Activated CD4-positive, alpha-beta T cell treated with anti-CD3 and anti-CD28 coated beads for 36 hours (primary cell): ENCODE measurements at regions of chr10 and their contacts with region 1.

Region 1: GRCh38 chr10:97037365-97038361 is 148.1 kb downstream of the SLIT1 start:
- DNase-seq: peak; percentile 87
- ATAC-seq: peak; percentile 96
- H3K4me3 Mint-ChIP-seq: peak overlapping the region; percentile 45
- H3K27ac Mint-ChIP-seq: no peak overlapping the region
- H3K4me1 Mint-ChIP-seq: peaks cover 12% of the 10 kb centered on the region
- H3K27me3 Mint-ChIP-seq: no peaks in the 10 kb centered on the region

Region 2: GRCh38 chr10:96700374-96701099 is 337.1 kb before region 1 on chr10:
- CTCF ChIA-PET with region 1: no interaction called
- POLR2A ChIA-PET with region 1: no interaction called
- intact Hi-C with region 1: no loop called
- DNase-seq: no peak
- ATAC-seq: no peak
- H3K4me3 Mint-ChIP-seq: no peak overlapping the region
- H3K27ac Mint-ChIP-seq: no peak overlapping the region
- H3K4me1 Mint-ChIP-seq: peaks cover 10% of the 10 kb centered on the region
- H3K27me3 Mint-ChIP-seq: no peaks in the 10 kb centered on the region

Region 3: DNA sequence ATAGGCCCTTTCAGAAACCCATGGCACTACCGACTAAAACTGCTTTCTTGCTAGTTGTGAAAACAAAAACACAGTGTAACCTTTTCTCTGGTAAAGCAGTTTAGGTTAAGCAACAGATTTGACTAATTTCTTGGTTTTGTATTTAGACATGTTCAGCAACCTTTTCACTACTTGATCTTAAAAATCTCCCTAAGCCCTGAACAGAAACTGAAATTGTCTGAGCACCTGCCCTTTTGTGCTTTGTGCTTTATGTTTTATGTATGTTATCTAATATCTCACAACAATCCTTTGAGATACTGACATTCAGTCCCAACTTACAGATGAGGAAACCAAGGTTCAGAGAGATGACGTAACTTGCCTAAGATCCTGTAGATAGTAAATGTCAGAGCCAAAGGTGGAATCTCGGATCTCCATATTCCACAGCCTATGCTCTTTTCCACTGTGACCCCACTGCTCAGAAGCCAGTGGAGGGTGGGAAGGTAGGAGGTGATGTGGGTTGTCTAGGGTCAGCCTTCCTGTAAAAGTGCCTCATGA is 59.0 kb before region 1 on chr10:
- CTCF ChIA-PET with region 1: interaction called, 11 read pairs
- POLR2A ChIA-PET with region 1: no interaction called
- intact Hi-C with region 1: no loop called
- DNase-seq: no peak
- ATAC-seq: peak; percentile 91
- H3K4me3 Mint-ChIP-seq: peak overlapping the region; percentile 12
- H3K27ac Mint-ChIP-seq: peak overlapping the region; percentile 85
- H3K4me1 Mint-ChIP-seq: peaks cover 21% of the 10 kb centered on the region
- H3K27me3 Mint-ChIP-seq: no peaks in the 10 kb centered on the region

Region 4: DNA sequence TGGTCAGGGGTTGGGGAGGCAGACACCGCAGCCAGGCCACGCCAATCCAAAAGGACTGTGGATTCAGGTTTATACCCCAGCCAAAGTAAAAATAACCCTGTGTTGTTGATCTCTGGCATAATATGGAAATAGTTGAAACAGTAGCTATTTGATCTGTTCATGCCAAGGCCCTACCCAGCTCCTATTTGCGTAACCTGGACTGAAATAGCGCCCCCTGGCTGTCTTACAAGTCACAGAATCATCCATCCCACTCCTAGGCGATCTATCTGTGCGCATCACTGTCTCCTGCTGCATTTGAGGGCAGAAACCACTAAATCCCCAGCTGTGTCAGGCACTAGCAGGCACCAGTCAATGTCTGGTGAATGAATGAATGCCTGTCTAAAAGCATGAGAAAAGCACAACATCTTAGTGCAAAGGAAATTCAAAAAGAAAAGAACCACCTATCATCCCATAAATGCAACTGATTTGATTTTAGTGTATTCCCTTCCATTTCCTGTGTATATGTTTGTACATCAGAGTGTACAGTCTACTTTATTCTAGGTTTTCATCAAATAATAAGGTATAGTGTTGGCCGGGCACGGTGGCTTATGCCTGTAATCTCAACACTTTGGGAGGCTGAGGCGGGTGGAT is 11.9 kb before region 1 on chr10:
- CTCF ChIA-PET with region 1: interaction called, 89 read pairs
- POLR2A ChIA-PET with region 1: no interaction called
- intact Hi-C with region 1: no loop called
- DNase-seq: peak; percentile 81
- ATAC-seq: peak; percentile 89
- H3K4me3 Mint-ChIP-seq: no peak overlapping the region
- H3K27ac Mint-ChIP-seq: no peak overlapping the region
- H3K4me1 Mint-ChIP-seq: no peaks in the 10 kb centered on the region
- H3K27me3 Mint-ChIP-seq: no peaks in the 10 kb centered on the region

Region 5: DNA sequence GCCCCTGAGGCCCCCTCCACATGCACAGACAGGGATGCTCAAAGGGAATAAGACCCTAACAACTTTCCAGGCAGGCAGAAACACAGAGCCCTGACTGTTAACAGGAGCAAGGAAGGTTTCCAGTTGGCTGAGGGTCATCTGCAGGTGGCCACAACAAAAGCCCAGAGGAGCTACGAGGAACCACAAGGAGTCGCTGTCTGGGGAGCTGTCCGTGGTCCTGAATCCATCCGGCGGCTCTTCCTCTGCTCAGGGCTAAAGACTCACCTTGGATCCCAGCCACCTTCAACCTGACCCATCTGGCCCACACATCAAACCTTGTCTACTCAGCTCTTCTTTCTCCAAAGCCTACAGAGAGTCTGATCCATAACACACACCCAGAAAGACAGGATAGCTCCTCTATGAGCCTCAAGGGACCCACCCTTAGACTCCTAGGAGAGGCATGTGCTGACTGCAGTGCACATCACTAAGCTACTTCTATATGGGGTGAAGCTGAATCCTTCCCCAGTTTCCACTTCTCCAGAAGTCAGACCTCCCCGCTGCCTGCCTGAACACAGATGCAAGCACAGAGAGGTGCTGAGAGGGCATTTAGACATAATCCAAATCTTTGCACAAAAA is 44.1 kb after region 1 on chr10:
- CTCF ChIA-PET with region 1: interaction called, 14 read pairs
- POLR2A ChIA-PET with region 1: no interaction called
- intact Hi-C with region 1: no loop called
- DNase-seq: peak; percentile 83
- ATAC-seq: peak; percentile 73
- H3K4me3 Mint-ChIP-seq: no peak overlapping the region
- H3K27ac Mint-ChIP-seq: no peak overlapping the region
- H3K4me1 Mint-ChIP-seq: no peaks in the 10 kb centered on the region
- H3K27me3 Mint-ChIP-seq: peaks cover 20% of the 10 kb centered on the region

Region 6: GRCh38 chr10:97234400-97234799 is 196.7 kb after region 1 on chr10:
- CTCF ChIA-PET with region 1: interaction called, 10 read pairs
- POLR2A ChIA-PET with region 1: no interaction called
- intact Hi-C with region 1: no loop called
- DNase-seq: no peak
- ATAC-seq: no peak
- H3K4me3 Mint-ChIP-seq: no peak overlapping the region
- H3K27ac Mint-ChIP-seq: no peak overlapping the region
- H3K4me1 Mint-ChIP-seq: peaks cover 17% of the 10 kb centered on the region
- H3K27me3 Mint-ChIP-seq: no peaks in the 10 kb centered on the region